CD4-positive, alpha-beta memory T cell (primary cell): ENCODE measurements at regions of chr1 and their contacts with region 1.

Region 1: DNA sequence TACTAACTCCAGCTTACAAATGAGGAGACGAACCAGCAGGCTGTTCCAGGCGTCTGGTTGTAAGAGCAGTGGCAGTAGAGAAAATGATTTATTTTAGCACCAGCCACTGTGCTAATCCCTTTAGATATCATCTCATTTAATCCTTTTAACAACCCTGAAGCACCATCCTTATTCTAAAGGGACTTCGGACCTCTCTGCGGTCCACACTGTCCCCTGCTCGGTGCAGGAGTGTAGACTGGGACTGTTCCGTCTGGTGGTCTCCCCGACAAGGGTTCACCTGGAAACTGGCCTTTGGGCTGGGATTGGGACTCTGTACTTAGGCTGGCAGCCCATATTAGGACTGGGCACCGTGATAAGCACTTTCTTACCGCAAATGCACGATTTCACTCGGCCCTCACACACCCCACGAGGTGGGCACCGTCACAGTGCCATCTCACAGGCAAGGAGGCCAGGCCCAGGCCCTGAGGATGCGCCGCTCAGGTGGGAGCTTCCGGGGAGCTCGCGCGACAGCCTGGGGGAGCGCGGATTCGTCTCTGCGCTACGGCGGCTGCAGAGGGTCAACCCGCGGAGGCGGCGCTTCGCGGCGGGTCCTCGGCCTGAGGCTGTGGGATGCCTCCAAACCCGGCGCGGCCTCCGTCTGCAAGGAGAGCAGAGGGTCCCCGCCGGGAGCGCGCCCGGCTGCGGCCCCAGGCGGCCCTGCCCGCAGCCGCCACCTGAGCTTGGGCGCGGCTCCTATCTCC is 45.2 kb downstream of the ATP1A1 start:
- DNase-seq: peak; percentile 86 to 90 (median 87)
- H3K4me3 ChIP-seq: peak overlapping the region; percentile 90 to 96
- H3K4me3 Mint-ChIP-seq: peak overlapping the region; percentile 84 to 96 (median 91)
- H3K27ac ChIP-seq: peak overlapping the region; percentile 80
- H3K27ac Mint-ChIP-seq: peak overlapping the region; percentile 95 to 98 (median 96)
- H3K4me1 ChIP-seq: peaks cover 32% of the 10 kb centered on the region
- H3K4me1 Mint-ChIP-seq: peaks cover 14 to 52% (median 27%) of the 10 kb centered on the region in 4 donors
- H3K27me3 ChIP-seq: no peaks in the 10 kb centered on the region
- H3K27me3 Mint-ChIP-seq: no peaks in the 10 kb centered on the region

Region 2: DNA sequence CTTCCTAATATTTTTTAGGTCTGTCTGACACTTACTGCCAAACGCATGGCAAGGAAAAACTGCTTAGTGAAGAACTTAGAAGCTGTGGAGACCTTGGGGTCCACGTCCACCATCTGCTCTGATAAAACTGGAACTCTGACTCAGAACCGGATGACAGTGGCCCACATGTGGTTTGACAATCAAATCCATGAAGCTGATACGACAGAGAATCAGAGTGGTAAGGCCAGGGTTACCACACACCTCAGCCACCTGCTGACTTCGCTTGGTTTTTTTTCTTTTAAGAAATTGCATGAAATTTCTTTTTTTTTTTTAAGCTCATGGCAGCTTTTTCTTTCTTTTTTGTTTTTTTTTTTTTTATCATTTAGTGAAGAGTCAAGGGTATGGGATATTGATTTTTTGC is 28.1 kb before region 1 on chr1:
- CTCF ChIA-PET with region 1: interaction called, 10 read pairs
- POLR2A ChIA-PET with region 1: interaction called, 7 read pairs
- intact Hi-C with region 1: no loop called
- DNase-seq: peak; percentile 49 to 85 (median 66)
- H3K4me3 ChIP-seq: no peak overlapping the region
- H3K4me3 Mint-ChIP-seq: peak overlapping the region in 4 of 8 donors; percentile 10 to 64 (median 36)
- H3K27ac ChIP-seq: peak overlapping the region; percentile 41
- H3K27ac Mint-ChIP-seq: peak overlapping the region; percentile 55 to 94 (median 86)
- H3K4me1 ChIP-seq: peaks cover 39% of the 10 kb centered on the region
- H3K4me1 Mint-ChIP-seq: peaks cover 42 to 63% (median 46%) of the 10 kb centered on the region in 4 donors
- H3K27me3 ChIP-seq: no peaks in the 10 kb centered on the region
- H3K27me3 Mint-ChIP-seq: no peaks in the 10 kb centered on the region

Region 3: DNA sequence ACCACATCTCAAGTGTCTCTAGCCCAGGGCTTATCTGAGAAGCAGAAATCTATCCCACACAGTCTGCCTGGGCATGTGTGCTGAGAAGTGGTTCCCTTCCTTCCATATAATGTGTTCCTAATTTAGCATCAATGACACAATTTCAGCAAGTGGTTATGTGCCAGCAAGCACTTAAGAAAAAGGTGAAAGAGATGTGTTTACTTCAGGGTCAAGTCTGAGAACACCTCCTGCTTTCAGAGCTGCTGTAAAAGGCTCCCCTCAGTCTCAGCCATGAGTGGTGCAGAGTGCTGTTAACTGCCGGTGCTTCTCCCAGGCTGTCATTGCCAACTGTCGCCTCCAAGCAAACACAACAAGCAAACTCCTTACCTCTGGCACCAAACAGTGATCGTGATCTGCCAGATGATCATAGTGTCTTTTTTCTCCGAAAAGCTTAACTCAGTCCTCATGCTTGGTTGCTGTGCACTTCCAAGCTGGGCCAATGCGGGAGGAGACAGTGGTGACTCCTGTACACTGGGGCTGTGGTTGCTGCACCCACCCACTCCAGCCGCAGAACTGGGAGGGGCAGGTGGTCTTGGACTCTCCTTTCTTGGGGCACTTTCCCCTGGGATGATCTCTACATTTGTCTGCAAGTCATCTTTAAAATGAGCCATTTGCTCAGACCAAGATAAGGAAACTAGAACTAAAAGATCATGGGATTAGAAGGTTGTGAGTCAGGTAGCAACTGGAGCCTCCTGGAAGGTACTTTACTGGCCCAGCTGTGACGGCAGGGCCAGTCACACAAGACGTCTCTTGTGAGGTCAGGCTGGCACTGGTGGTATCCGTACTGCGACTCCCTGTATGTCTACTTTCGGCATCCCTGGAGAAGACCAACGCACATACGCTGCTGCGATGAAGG is 12.8 kb before region 1 on chr1:
- CTCF ChIA-PET with region 1: interaction called, 3 read pairs
- POLR2A ChIA-PET with region 1: interaction called, 32 read pairs
- intact Hi-C with region 1: no loop called
- DNase-seq: no peak
- H3K4me3 ChIP-seq: no peak overlapping the region
- H3K4me3 Mint-ChIP-seq: no peak overlapping the region
- H3K27ac ChIP-seq: no peak overlapping the region
- H3K27ac Mint-ChIP-seq: peak overlapping the region in 6 of 7 donors; percentile 22 to 69 (median 51)
- H3K4me1 ChIP-seq: peaks cover 11% of the 10 kb centered on the region
- H3K4me1 Mint-ChIP-seq: peaks cover 10 to 28% (median 21%) of the 10 kb centered on the region in 4 donors
- H3K27me3 ChIP-seq: no peaks in the 10 kb centered on the region
- H3K27me3 Mint-ChIP-seq: no peaks in the 10 kb centered on the region

Region 4: GRCh38 chr1:116433275-116434257 is 15.3 kb after region 1 on chr1:
- CTCF ChIA-PET with region 1: interaction called, 3 read pairs
- POLR2A ChIA-PET with region 1: interaction called, 16 read pairs
- intact Hi-C with region 1: no loop called
- DNase-seq: no peak
- H3K4me3 ChIP-seq: no peak overlapping the region
- H3K4me3 Mint-ChIP-seq: no peak overlapping the region
- H3K27ac ChIP-seq: no peak overlapping the region
- H3K27ac Mint-ChIP-seq: no peak overlapping the region
- H3K4me1 ChIP-seq: no peaks in the 10 kb centered on the region
- H3K4me1 Mint-ChIP-seq: no peaks in the 10 kb centered on the region
- H3K27me3 ChIP-seq: no peaks in the 10 kb centered on the region
- H3K27me3 Mint-ChIP-seq: no peaks in the 10 kb centered on the region